Breast epithelium (tissue), 4 donors: ENCODE measurements at regions of chr22 and their contacts with region 1.

Region 1: GRCh38 chr22:22942511-22943329 is 55.1 kb downstream of the IGLL5 start:
- DNase-seq: peak in 1 of 2 donors; percentile 51
- H3K4me3 ChIP-seq: no peak overlapping the region
- H3K27ac ChIP-seq: no peak overlapping the region
- H3K4me1 ChIP-seq: no peaks in the 10 kb centered on the region
- H3K27me3 ChIP-seq: peaks cover 0 to 3% of the 10 kb centered on the region in 2 donors
- CTCF ChIP-seq: peak in 1 of 3 donors; percentile 28
- POLR2A ChIP-seq: no peak

Region 2: GRCh38 chr22:22811016-22812009 is 131.4 kb before region 1 on chr22:
- intact Hi-C with region 1: loop called (anchors 1 kb)
- DNase-seq: peak in 1 of 2 donors; percentile 7
- H3K4me3 ChIP-seq: no peak overlapping the region
- H3K27ac ChIP-seq: no peak overlapping the region
- H3K4me1 ChIP-seq: no peaks in the 10 kb centered on the region
- H3K27me3 ChIP-seq: no peaks in the 10 kb centered on the region
- CTCF ChIP-seq: no peak
- POLR2A ChIP-seq: no peak